Naive thymus-derived CD4-positive, alpha-beta T cell (primary cell): ENCODE measurements at regions of chr1 and their contacts with region 1.

Region 1: DNA sequence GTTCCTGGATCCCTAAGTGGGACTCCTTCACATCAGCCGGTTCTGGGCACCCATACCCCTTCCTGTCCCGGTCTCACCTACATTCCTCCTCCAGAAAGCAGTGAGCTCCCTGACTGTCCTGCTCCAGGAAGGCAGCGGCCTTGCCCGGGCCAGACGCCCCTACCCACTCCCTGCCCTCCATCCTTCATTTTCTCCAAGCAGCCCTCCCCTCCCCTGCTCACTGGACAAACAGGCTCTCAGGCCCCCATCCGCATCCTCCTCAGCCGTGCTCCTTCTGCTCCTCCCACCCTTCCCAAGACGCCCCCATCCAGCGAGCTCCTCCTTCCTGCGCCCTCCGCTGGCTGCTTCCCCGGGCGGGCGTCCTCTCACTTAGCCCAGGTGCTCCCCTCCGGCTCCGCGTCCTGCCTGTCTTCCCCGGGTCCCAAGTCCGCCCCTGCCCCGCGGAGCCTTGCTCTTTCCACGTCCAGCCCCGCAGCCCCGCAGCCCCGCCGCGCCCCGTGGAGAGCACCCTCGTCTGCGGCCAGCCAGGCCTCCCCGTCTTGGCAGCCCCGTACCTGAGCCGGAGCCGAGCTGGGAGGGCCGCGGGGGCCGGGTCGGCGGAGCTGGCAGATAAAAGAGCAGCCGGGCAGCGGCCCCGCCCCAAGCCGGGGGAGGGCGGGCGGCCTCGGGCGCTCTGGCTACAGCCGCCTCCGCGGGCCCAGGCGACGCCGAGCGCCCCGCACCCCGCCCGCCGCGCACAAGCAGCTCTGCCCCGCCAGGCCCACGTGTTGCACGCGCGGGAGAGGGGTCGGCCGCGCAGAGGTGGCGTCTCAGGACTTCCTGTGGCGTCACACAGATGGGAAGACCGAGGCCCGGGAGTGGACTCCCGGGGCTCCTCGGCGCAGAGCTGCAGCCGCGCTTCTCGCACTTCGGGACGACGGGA is at the start of gene PAQR7:
- DNase-seq: peak; percentile 47 to 74 (median 53)
- ATAC-seq: peak; percentile 89
- H3K4me3 ChIP-seq: peak within 1 kb of the TSS; percentile 64
- H3K4me3 Mint-ChIP-seq: peak within 1 kb of the TSS; percentile 75 to 91 (median 86)
- H3K27ac ChIP-seq: peak within 1 kb of the TSS; percentile 56
- H3K27ac Mint-ChIP-seq: peak within 1 kb of the TSS; percentile 54 to 89 (median 81)
- H3K4me1 ChIP-seq: peaks cover 9 to 11% of the 10 kb centered on the region in 2 donors
- H3K4me1 Mint-ChIP-seq: peaks cover 0 to 16% (median 7%) of the 10 kb centered on the region in 7 donors
- H3K27me3 ChIP-seq: no peaks in the 10 kb centered on the region
- H3K27me3 Mint-ChIP-seq: peaks cover 0 to 23% (median 0%) of the 10 kb centered on the region in 5 donors
- total RNA-seq, gene PAQR7: 3.4 to 6.0 (median 4.0) TPM

Region 2: GRCh38 chr1:25170439-25170838 is 704.8 kb before region 1 on chr1:
- CTCF ChIA-PET with region 1: no interaction called
- POLR2A ChIA-PET with region 1: interaction called, 10 read pairs
- intact Hi-C with region 1: no loop called
- DNase-seq: no peak
- ATAC-seq: no peak
- H3K4me3 ChIP-seq: no peak overlapping the region
- H3K4me3 Mint-ChIP-seq: no peak overlapping the region
- H3K27ac ChIP-seq: no peak overlapping the region
- H3K27ac Mint-ChIP-seq: no peak overlapping the region
- H3K4me1 ChIP-seq: no peaks in the 10 kb centered on the region
- H3K4me1 Mint-ChIP-seq: peaks cover 0 to 6% (median 2%) of the 10 kb centered on the region in 7 donors
- H3K27me3 ChIP-seq: no peaks in the 10 kb centered on the region
- H3K27me3 Mint-ChIP-seq: peaks cover 0 to 2% (median 0%) of the 10 kb centered on the region in 5 donors

Region 3: DNA sequence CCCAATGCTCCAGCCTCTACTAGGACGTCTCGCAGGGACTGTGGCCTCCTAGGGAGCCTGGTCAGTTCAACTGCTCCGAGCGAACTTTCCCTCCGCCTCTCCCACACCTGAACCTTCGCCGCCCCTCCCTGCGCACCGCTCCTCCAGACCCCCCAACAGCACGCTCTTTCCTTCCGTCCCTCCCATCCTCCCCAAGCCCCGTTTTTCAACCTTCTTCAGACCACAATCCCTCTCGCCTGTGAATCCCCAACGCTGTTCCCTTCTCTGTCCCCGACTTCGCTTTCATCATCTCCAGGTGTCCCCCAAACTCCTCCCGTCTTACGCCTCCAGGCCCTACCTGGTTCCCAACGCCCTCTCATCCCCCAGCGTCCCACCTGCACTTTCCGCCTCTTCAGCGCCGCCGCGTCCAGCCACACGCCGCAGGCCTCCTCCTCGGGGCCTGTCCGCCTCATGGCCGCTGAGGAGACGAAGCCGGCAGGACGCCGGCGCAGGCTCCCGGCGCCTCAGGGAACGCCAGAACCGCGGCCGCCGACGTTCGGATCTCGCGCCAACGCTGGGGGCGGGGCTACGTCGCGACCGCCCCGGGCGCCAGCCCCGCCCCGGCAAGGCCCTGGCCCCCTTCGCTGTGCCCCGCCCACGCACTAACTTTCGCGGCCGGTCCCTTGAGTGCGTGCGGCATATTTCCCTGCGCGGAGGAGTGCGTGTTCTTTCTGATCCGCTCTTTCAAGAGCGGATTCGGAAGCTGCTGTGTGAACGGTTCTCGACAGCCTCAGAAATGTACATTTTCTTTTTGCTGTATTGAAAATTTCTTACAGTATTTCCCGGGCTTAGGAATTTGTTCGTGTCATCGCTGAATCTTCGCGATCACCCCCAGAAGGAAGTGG is 16.0 kb before region 1 on chr1 and contains the start of gene AUNIP:
- CTCF ChIA-PET with region 1: no interaction called
- POLR2A ChIA-PET with region 1: interaction called, 7 read pairs
- intact Hi-C with region 1: loop called (anchors 1 kb)
- DNase-seq: peak; percentile 84 to 95 (median 90)
- ATAC-seq: peak; percentile 100
- H3K4me3 ChIP-seq: peak within 1 kb of the TSS; percentile 78
- H3K4me3 Mint-ChIP-seq: peak within 1 kb of the TSS; percentile 87 to 99 (median 94)
- H3K27ac ChIP-seq: peak within 1 kb of the TSS; percentile 77
- H3K27ac Mint-ChIP-seq: peak within 1 kb of the TSS; percentile 83 to 97 (median 95)
- H3K4me1 ChIP-seq: peaks cover 9 to 10% of the 10 kb centered on the region in 2 donors
- H3K4me1 Mint-ChIP-seq: peaks cover 0 to 32% (median 24%) of the 10 kb centered on the region in 7 donors
- H3K27me3 ChIP-seq: no peaks in the 10 kb centered on the region
- H3K27me3 Mint-ChIP-seq: no peaks in the 10 kb centered on the region
- total RNA-seq, gene AUNIP: 0.83 to 4.3 TPM in 2 of 5 experiments, not detected in the others

Region 4: DNA sequence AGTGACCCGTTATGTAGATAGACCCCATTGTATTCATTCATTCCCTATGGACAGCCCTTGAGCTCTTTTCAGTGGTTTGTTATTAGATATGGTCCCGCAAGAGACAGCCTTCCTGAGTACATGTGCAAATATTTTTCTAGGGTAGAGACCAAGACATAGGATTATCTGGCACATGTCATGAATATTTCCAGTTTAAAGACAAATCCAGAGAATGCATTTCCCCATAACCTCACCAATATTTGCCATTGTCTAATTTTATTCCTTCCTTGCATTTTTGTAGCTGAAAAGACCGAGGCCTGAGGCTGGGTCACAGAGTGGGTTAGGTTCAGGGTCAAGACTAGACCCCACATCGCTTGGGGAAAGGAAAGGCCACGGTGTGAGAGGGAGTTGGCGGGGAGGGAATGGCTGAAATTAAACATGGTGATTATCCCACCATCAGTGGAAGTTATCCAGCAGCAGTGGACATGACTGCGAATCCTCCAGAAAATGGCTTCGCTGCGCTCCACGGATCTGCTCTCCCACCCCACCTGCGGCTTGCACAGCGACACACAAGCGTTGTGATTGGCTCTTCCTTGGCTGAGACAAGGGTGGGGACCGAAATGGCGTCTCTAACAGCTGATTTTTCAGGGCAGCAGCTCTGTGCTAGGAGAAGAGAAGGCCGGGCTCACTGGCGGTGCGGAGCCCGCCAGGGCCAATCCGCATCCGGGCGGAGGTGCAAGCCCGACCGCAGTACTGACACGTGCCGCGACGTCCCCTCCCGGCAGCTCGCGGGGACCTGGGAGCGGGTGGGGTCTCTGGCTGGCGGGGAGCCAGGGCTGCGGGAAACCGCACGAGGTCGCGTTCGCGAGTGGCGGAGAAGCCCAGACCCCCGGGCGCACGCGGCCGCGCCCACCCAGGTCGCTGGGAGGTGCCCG is 47.1 kb after region 1 on chr1:
- CTCF ChIA-PET with region 1: no interaction called
- POLR2A ChIA-PET with region 1: no interaction called
- intact Hi-C with region 1: no loop called
- DNase-seq: peak; percentile 26 to 64 (median 57)
- ATAC-seq: peak; percentile 84
- H3K4me3 ChIP-seq: peak overlapping the region; percentile 79
- H3K4me3 Mint-ChIP-seq: peak overlapping the region; percentile 78 to 91 (median 88)
- H3K27ac ChIP-seq: peak overlapping the region; percentile 60
- H3K27ac Mint-ChIP-seq: peak overlapping the region; percentile 31 to 90 (median 82)
- H3K4me1 ChIP-seq: peaks cover 19 to 20% of the 10 kb centered on the region in 2 donors
- H3K4me1 Mint-ChIP-seq: peaks cover 23 to 56% (median 43%) of the 10 kb centered on the region in 7 donors
- H3K27me3 ChIP-seq: no peaks in the 10 kb centered on the region
- H3K27me3 Mint-ChIP-seq: peaks cover 0 to 57% (median 0%) of the 10 kb centered on the region in 5 donors